Stomach (tissue), 19 donors: ENCODE measurements at regions of chr5 and their contacts with region 1.

Region 1: GRCh38 chr5:134845852-134846640 is at the start of gene C5orf24:
- DNase-seq: peak; percentile 97 to 99
- H3K4me3 ChIP-seq: peak within 1 kb of the TSS; percentile 79 to 95 (median 91)
- H3K27ac ChIP-seq: peak within 1 kb of the TSS; percentile 94 to 98 (median 96)
- H3K4me1 ChIP-seq: peaks cover 43 to 56% (median 52%) of the 10 kb centered on the region in 4 donors
- H3K27me3 ChIP-seq: no peaks in the 10 kb centered on the region
- CTCF ChIP-seq: no peak
- EP300 ChIP-seq: no peak
- POLR2A ChIP-seq: peak in 2 of 4 donors; percentile 51 to 88
- total RNA-seq, gene C5orf24: 28.6 to 54.9 (median 43.9) TPM

Region 2: DNA sequence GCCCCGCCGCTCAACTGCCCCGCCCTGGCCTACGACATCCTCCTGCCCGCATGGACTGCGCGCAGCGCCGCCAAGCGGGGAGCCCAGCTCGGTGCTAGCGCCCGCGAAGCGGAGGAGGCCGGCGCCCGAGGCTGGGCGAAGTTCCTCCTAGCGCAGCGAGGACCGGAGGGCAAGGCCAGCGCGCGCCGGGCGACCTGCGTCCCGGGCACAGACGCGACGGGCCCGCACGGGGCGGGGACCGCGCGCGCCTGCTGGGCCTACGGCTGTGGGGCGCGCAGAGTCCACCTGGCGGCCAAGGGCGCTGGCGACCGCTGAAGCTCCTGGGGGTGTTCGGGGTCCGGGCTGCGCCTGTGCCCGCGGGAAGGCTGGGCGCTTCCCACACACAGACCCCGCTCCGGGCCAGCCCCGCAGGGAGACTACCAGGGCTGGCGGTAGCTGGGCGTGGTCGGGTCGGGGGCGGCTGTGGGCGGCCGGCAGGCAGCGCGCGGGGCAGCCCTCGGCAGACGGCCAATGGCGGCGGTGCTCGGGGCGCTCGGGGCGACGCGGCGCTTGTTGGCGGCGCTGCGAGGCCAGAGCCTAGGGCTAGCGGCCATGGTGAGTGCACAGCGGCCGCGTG is 58.7 kb after region 1 on chr5 and contains the start of gene PCBD2:
- intact Hi-C with region 1: loop called (anchors 10 kb)
- DNase-seq: peak; percentile 93 to 97
- H3K4me3 ChIP-seq: peak within 1 kb of the TSS; percentile 72 to 89 (median 81)
- H3K27ac ChIP-seq: peak within 1 kb of the TSS; percentile 98 to 100 (median 98)
- H3K4me1 ChIP-seq: peaks cover 0 to 24% (median 7%) of the 10 kb centered on the region in 4 donors
- H3K27me3 ChIP-seq: no peaks in the 10 kb centered on the region
- CTCF ChIP-seq: peak in 5 of 7 experiments; percentile 69 to 94 (median 81)
- EP300 ChIP-seq: no peak
- POLR2A ChIP-seq: no peak
- total RNA-seq, gene PCBD2: under 0.01 to 18.5 (median 6.7) TPM